ENCODE measurements at regions of chr11 and their contacts with region 1.

Region 1: GRCh38 chr11:118240999-118241768 is 11.0 kb downstream of the MPZL3 start:
- DNase-seq: peak; percentile 59 to 91 (median 67)
- H3K4me3 ChIP-seq: peak overlapping the region in 1 of 2 donors; percentile 21
- H3K4me3 Mint-ChIP-seq: peak overlapping the region; percentile 46 to 79 (median 72)
- H3K27ac ChIP-seq: peak overlapping the region; percentile 65
- H3K27ac Mint-ChIP-seq: peak overlapping the region; percentile 87 to 98 (median 93)
- H3K4me1 ChIP-seq: peaks cover 68% of the 10 kb centered on the region
- H3K4me1 Mint-ChIP-seq: peaks cover 64 to 83% (median 74%) of the 10 kb centered on the region in 4 donors
- H3K27me3 ChIP-seq: no peaks in the 10 kb centered on the region
- H3K27me3 Mint-ChIP-seq: no peaks in the 10 kb centered on the region

Region 2: DNA sequence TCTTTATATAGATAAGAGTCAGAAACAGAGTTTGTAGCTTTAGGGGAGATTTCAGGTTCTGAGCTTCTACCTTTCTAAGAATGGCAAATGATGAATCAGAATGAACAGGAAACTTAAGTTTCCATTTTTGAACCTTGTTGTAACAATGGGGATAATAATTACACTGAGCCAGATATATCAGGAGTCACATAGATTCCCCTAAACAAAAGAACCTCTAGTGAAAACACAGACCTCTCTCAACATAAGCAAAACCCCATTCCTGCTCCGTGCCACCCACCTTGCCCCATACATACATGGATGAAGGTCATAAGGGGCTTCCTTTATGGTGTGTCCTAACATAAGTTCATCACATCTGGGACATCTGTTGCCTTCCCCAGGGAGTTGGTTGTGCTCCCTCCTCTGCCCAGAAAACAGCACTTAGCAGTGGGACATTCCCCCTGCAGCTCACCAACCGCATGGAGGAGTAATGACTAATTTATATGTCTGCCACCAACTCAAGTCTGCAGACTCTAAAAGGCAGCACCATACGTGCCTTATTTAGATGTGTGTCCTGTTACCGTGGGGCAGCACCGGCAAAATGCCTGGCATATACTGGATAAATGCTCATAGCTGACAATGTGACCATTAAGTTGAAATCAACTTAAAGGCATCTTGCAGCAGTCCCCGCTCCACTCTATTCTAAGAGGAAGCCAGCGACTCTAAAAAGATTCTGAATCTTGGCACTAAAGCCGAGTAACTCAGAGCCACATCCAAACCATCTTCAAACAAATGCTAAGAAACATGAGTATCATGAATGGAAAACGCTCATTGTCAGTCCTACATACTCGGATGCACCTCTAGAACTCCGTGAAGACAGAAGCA is 24.3 kb before region 1 on chr11:
- CTCF ChIA-PET with region 1: interaction called, 3 read pairs
- POLR2A ChIA-PET with region 1: interaction called, 26 read pairs
- intact Hi-C with region 1: loop called (anchors 1 kb)
- DNase-seq: peak in 1 of 5 donors; percentile 73
- H3K4me3 ChIP-seq: peak overlapping the region; percentile 2 to 35
- H3K4me3 Mint-ChIP-seq: peak overlapping the region; percentile 73 to 91 (median 87)
- H3K27ac ChIP-seq: peak overlapping the region; percentile 50
- H3K27ac Mint-ChIP-seq: peak overlapping the region; percentile 90 to 96 (median 93)
- H3K4me1 ChIP-seq: peaks cover 90% of the 10 kb centered on the region
- H3K4me1 Mint-ChIP-seq: peaks cover 62 to 100% (median 84%) of the 10 kb centered on the region in 4 donors
- H3K27me3 ChIP-seq: no peaks in the 10 kb centered on the region
- H3K27me3 Mint-ChIP-seq: no peaks in the 10 kb centered on the region

Measured in CD4-positive, alpha-beta memory T cell (primary cell).